ENCODE measurements at regions of chr3 and their contacts with region 1.

Region 1: DNA sequence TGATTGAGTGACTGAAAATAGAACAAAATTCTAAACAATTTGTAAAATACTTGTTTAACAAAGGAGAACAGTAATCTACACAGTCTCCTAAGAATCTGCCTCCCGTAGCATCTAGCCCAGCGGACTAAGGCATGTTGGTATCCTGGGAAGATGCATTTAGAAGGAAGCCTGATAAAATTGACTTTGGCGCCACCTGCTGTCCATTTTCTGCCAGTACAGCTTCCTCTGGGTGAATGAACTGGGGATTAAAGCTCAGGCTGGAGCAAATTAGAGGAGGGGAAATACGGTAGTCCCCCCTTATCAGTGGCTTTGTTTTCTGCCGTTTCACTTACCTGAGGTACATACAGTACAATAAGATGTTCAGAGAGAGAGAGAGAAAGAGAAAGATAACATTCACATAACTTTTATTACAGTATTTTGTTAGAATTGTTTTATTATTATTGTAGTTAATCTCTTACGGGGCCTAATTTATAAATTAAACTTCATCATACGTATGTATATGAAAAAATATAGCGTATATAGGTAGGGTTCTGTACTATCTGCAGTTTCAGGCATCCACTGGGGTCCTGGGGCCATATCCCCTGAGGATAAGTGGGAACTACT is 191.6 kb downstream of the GAP43 start:
- DNase-seq: peak; percentile 38 to 78 (median 70)
- ATAC-seq: peak; percentile 66
- H3K4me3 ChIP-seq: no peak overlapping the region
- H3K4me3 Mint-ChIP-seq: no peak overlapping the region
- H3K27ac ChIP-seq: no peak overlapping the region
- H3K27ac Mint-ChIP-seq: no peak overlapping the region
- H3K4me1 ChIP-seq: no peaks in the 10 kb centered on the region
- H3K4me1 Mint-ChIP-seq: no peaks in the 10 kb centered on the region
- H3K27me3 ChIP-seq: no peaks in the 10 kb centered on the region
- H3K27me3 Mint-ChIP-seq: peaks cover 10% of the 10 kb centered on the region
- CTCF ChIP-seq: peak; percentile 100

Region 2: DNA sequence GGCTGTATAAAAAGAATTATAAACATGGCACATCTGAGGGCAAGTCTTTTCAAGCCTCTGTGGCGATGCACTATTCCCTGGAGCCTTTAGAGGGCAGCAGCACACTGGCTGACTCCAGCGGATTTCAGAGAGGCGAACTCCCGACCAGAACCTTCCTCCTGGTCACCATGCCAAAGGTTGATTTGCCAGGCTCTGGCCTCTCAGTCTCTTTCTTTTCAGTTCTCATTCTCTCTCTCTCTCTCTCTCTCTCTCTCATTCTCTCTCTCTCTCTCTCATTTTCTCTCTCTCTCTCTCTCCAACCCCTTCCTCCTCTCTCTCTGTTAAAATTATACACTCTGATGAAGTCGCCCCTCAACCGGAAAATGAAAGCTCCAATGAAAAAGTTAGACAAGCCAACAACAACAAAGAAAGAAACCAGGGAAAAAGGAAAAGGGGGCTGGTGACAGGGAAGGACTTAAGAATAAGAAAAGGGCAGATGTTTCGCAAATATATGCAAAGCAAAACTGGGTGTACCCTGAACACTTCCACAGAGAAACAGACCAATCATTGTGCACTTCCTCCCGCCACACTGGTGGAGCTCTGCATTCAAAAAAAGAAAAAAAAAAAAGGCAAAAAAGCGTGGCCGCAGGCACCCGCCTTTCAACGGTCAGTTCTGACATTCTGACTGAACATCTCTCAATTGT is 1430.9 kb before region 1 on chr3:
- CTCF ChIA-PET with region 1: no interaction called
- POLR2A ChIA-PET with region 1: no interaction called
- intact Hi-C with region 1: loop called (anchors 2 to 10 kb)
- DNase-seq: peak; percentile 34 to 78 (median 65)
- ATAC-seq: peak; percentile 97
- H3K4me3 ChIP-seq: peak overlapping the region; percentile 30 to 44
- H3K4me3 Mint-ChIP-seq: peak overlapping the region; percentile 82
- H3K27ac ChIP-seq: peak overlapping the region in 1 of 2 experiments; percentile 43
- H3K27ac Mint-ChIP-seq: peak overlapping the region; percentile 82
- H3K4me1 ChIP-seq: peaks cover 6% of the 10 kb centered on the region
- H3K4me1 Mint-ChIP-seq: peaks cover 18% of the 10 kb centered on the region
- H3K27me3 ChIP-seq: no peaks in the 10 kb centered on the region
- H3K27me3 Mint-ChIP-seq: no peaks in the 10 kb centered on the region
- CTCF ChIP-seq: peak; percentile 91

Region 3: DNA sequence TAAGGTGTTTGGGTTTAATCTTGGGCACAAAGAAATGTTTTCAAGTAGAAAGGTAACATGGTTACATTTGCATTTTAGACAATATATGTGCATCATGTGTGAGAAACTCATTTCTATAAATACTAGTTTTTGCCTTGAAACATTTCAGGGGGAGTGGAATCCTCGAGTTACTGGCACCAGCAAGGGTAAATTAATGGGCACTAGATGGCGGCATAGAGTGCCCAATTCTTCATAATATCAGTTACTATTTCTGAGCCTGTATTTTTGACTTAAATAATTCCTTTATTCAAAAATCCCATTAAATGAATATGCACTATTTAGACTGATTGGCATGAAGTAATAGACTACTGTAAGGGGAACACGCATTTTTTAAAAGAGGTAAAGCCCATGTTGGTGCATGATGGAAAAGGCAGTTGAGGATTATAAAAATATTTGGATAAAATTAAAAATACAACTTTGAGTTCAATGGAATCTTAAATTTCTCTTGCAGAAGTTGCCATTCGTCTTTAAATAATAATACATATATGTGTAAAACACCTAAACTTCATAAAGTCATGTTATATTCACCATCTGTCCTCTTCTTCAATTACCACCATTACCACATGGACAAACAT is 774.1 kb before region 1 on chr3:
- CTCF ChIA-PET with region 1: no interaction called
- POLR2A ChIA-PET with region 1: no interaction called
- intact Hi-C with region 1: loop called in 1 of 2 experiments (anchors 2 kb)
- DNase-seq: peak in 8 of 9 experiments; percentile 1 to 62 (median 33)
- ATAC-seq: peak; percentile 69
- H3K4me3 ChIP-seq: no peak overlapping the region
- H3K4me3 Mint-ChIP-seq: no peak overlapping the region
- H3K27ac ChIP-seq: no peak overlapping the region
- H3K27ac Mint-ChIP-seq: no peak overlapping the region
- H3K4me1 ChIP-seq: no peaks in the 10 kb centered on the region
- H3K4me1 Mint-ChIP-seq: peaks cover 12% of the 10 kb centered on the region
- H3K27me3 ChIP-seq: no peaks in the 10 kb centered on the region
- H3K27me3 Mint-ChIP-seq: no peaks in the 10 kb centered on the region
- CTCF ChIP-seq: peak; percentile 70

Region 4: DNA sequence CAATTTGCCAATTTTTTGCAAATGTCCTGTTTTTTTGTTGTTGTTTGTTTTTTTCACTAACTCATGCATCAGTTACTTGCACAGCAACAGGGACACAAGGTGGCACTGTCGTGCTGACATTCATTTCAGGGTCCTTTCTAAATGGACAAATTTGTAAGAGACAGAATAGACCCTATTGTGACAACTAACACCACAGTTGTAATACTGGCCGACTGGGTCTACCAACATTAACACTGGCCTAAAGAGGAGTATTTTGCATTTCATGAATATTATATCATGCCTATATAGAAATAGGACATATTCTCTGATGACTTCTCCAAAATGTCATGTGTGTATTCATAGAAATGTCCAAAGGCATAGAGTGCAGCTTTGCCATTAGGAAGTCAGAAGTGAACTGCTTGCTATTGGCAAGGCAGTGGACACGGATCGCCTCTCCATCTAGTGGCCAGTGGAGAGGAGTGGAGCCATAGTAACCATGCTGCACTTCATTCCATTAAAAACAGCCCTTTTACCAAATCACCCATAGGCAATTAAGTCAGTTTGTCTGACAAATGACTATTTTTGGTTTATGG is 722.6 kb before region 1 on chr3:
- CTCF ChIA-PET with region 1: interaction called, 3 read pairs
- POLR2A ChIA-PET with region 1: no interaction called
- intact Hi-C with region 1: loop called (anchors 1 to 2 kb)
- DNase-seq: peak; percentile 32 to 77 (median 65)
- ATAC-seq: peak; percentile 72
- H3K4me3 ChIP-seq: no peak overlapping the region
- H3K4me3 Mint-ChIP-seq: no peak overlapping the region
- H3K27ac ChIP-seq: no peak overlapping the region
- H3K27ac Mint-ChIP-seq: peak overlapping the region; percentile 8
- H3K4me1 ChIP-seq: no peaks in the 10 kb centered on the region
- H3K4me1 Mint-ChIP-seq: peaks cover 50% of the 10 kb centered on the region
- H3K27me3 ChIP-seq: no peaks in the 10 kb centered on the region
- H3K27me3 Mint-ChIP-seq: no peaks in the 10 kb centered on the region
- CTCF ChIP-seq: peak; percentile 89

Region 5: DNA sequence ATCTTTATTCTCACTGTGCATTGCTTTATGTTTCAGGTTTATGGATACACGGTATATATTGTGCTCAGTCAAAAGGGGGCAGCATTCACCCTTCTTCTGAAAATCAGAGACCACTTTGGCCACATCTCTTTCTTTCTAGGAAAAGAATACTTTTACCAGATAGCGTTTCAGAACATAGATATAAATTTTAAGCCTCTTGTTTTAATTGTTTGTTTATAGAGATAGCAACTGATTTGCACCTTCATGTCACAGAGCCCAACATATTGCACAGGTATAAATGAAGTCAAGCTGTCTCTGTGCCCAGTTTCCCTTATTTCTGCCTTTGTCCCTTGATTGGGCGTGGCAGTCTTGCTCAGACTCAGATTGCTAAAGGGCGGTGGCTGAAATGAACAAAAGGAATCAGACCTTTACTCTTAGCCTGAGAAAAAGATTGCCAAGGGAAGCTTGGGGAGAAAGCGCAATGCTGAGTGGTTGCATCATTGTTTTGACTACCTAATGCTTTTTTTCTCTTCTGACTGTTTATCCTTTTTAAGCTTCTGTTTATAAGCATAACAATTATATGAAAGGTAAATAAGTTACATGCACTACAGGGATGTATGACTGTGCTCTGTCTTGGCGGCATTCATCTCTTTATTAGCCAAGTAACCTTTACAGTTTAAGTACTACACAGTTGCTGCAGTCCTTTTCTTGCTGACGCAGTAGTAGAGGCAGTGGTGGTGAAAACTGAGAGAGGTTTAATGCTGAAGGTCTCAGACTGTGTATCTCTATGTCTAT is 597.0 kb before region 1 on chr3:
- CTCF ChIA-PET with region 1: interaction called, 8 read pairs
- POLR2A ChIA-PET with region 1: no interaction called
- intact Hi-C with region 1: loop called (anchors 1 kb)
- DNase-seq: peak in 3 of 9 experiments; percentile 14 to 51 (median 43)
- ATAC-seq: no peak
- H3K4me3 ChIP-seq: no peak overlapping the region
- H3K4me3 Mint-ChIP-seq: no peak overlapping the region
- H3K27ac ChIP-seq: no peak overlapping the region
- H3K27ac Mint-ChIP-seq: no peak overlapping the region
- H3K4me1 ChIP-seq: no peaks in the 10 kb centered on the region
- H3K4me1 Mint-ChIP-seq: no peaks in the 10 kb centered on the region
- H3K27me3 ChIP-seq: no peaks in the 10 kb centered on the region
- H3K27me3 Mint-ChIP-seq: peaks cover 2% of the 10 kb centered on the region
- CTCF ChIP-seq: peak; percentile 38

Region 6: DNA sequence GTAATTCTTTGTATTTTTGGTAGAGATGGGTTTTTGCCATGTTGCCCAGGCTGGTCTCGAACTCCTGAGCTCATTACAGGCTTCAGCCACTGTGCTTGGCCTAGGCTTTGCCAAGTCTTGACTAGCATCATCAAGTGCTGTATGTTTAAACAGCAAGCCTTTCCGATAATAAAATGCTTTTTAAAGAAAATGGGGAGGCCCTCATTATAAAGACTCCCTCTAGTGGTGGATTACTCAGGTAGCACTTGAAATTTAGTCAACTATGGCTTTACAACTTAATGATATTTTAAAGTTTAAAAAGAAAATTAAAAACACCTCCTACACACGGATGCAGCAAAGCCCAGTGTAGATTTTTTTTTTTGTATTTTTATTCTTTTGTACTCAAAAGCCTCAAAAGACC is 22.1 kb after region 1 on chr3:
- CTCF ChIA-PET with region 1: interaction called, 28 read pairs
- POLR2A ChIA-PET with region 1: no interaction called
- intact Hi-C with region 1: no loop called
- DNase-seq: peak in 2 of 9 experiments; percentile 10 to 11
- ATAC-seq: no peak
- H3K4me3 ChIP-seq: no peak overlapping the region
- H3K4me3 Mint-ChIP-seq: no peak overlapping the region
- H3K27ac ChIP-seq: no peak overlapping the region
- H3K27ac Mint-ChIP-seq: no peak overlapping the region
- H3K4me1 ChIP-seq: no peaks in the 10 kb centered on the region
- H3K4me1 Mint-ChIP-seq: no peaks in the 10 kb centered on the region
- H3K27me3 ChIP-seq: no peaks in the 10 kb centered on the region
- H3K27me3 Mint-ChIP-seq: peaks cover 3% of the 10 kb centered on the region
- CTCF ChIP-seq: peak; percentile 67

Measured in CD8-positive, alpha-beta T cell (primary cell).